Ovary (tissue), 10 donors: ENCODE measurements at regions of chr9 and their contacts with region 1.

Region 1: GRCh38 chr9:96418074-96418809 is at the start of gene ZNF367:
- DNase-seq: peak; percentile 95 to 97 (median 96)
- H3K4me3 ChIP-seq: peak within 1 kb of the TSS; percentile 74
- H3K27ac ChIP-seq: peak within 1 kb of the TSS; percentile 95 to 96
- H3K4me1 ChIP-seq: peaks cover 8% of the 10 kb centered on the region
- H3K27me3 ChIP-seq: no peaks in the 10 kb centered on the region
- CTCF ChIP-seq: no peak
- EP300 ChIP-seq: no peak
- POLR2A ChIP-seq: no peak
- total RNA-seq, gene ZNF367: 1.3 to 2.4 (median 1.9) TPM

Region 2: DNA sequence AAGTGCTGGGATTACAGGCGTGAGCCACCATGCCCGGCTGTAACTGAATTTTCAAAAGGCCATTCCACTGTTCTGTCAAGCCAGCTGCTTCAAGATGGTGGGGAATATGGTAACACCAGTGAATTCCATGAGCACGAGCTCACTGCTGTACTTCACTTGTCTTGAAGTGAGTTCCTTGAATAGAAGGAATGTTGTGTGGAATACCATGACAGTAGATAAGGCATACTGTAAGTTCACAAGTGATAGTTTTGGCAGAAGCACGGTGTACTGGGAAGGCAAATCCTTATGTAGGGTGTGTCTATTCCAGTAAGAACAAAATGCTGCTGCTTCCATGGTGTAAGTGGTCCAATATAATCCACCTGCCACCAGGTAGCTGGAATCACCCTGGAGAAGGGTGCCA is 243.5 kb after region 1 on chr9:
- intact Hi-C with region 1: loop called in 1 of 4 experiments (anchors 10 kb)
- DNase-seq: no peak
- H3K4me3 ChIP-seq: no peak overlapping the region
- H3K27ac ChIP-seq: no peak overlapping the region
- H3K4me1 ChIP-seq: no peaks in the 10 kb centered on the region
- H3K27me3 ChIP-seq: no peaks in the 10 kb centered on the region
- CTCF ChIP-seq: no peak
- EP300 ChIP-seq: no peak
- POLR2A ChIP-seq: no peak